Head of caudate nucleus (tissue), 42 donors: ENCODE measurements at regions of chr1 and their contacts with region 1.

Region 1: DNA sequence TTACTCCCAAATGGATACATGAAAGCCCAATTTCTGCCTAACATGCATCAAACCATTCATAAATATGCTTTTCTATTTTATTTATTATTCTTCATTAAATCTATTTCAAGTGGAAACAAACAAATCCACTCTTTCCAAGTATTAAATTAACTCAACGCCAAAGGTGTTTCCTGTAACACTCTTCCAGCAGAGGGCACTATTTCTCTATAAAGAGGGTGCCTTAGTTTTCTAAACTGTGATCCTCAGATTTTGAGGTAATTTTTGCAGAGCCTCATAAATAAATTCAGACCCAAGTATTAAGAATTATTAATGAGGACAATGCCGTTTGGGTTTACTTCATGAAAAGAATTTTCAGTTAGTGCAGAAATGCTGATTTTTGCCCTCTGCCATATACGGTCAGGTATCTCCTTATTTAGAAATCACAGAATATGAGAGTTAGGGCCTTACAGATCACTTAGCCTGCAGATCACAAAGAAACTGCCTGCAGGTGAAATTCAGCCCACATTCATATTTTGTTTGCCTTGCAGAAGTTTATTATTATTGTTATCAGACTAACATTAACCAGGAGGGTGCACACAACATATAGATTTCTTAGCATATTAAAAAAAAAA is 40.1 kb upstream of the MYSM1 start:
- DNase-seq: peak in 13 of 42 donors; percentile 15 to 75 (median 32)

Region 2: GRCh38 chr1:59707178-59707791 is 967.3 kb after region 1 on chr1:
- intact Hi-C with region 1: loop called (anchors 10 kb)
- DNase-seq: peak in 30 of 42 donors; percentile 12 to 84 (median 43)

Region 3: DNA sequence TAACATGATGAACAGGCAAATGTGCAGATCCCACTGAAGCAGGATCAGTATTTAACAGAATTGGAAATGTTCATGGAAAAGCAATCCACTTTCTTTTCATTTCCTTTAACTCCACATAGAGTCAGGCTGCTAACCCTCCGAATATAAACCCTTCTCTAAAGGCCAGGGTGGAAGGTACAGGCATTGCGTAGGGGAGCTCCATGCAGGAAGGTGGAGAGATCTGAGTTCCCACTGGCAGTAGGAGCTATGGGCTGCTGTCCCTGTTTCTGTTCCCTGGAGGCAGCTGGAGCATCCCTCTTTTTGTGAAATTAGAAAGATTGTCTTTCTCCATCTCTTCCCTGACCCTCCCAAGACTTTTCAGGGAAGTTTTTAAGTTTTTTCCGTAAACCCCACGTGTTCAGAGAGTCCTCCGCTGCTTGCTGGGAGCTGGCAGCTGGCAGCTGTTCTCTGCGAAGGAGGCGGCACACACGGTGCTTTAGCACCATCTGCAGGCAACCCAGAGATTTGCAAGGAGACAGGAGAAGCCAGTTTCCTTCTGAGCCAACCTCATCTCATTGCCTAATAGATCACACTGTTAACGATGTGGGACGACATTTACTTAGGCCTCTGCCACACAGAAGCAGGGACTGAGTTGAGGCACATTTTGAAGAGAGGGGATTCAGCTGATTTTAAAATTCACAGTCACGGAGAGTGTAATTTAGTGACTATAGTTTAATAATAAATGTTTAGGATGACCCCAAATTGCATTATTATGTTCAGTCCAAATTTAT is 1019.4 kb after region 1 on chr1:
- intact Hi-C with region 1: loop called (anchors 2 kb)
- DNase-seq: peak; percentile 74 to 94 (median 86)